ENCODE measurements at regions of chr20 and their contacts with region 1.

Region 1: DNA sequence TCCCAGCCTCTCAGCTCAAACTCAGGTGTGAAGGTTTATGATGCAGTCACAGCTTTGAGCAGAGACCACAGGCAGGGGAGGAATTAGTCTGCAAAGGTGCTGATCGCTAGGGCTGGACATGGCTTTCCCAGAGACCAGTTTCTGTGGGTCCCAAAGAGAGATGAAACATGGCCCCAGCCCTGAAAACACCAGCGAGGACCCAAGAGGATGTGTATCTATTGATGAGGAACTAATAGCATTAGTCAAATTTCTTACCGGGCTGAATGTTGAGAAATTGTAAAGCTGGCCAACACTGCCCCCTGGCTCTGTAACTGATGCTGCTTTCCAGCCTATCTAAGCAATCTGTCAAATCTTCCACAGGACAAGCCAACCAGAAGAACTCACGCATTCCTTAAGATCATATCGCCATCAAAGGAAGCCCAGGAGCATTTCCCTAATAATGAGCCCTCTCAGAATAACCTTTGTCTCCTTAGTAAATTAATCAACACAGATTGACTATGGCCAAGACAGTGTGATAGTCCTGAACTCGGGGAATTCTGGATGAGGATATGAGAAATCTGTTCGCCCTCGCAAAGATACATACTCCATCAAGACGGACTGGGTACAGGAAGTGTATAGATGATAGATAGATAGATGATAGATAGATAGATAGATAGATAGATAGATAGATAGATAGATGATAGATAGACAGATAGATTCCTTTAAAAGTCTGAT is 7.8 kb upstream of the ACSS1 start:
- DNase-seq: peak; percentile 83
- ATAC-seq: peak; percentile 65
- H3K4me3 Mint-ChIP-seq: no peak overlapping the region
- H3K27ac Mint-ChIP-seq: no peak overlapping the region
- H3K4me1 Mint-ChIP-seq: peaks cover 4% of the 10 kb centered on the region
- H3K27me3 Mint-ChIP-seq: peaks cover 15% of the 10 kb centered on the region
- CTCF ChIP-seq: peak; percentile 77

Region 2: GRCh38 chr20:24816907-24817306 is 248.9 kb before region 1 on chr20:
- CTCF ChIA-PET with region 1: no interaction called
- POLR2A ChIA-PET with region 1: no interaction called
- intact Hi-C with region 1: no loop called
- DNase-seq: no peak
- ATAC-seq: no peak
- H3K4me3 Mint-ChIP-seq: no peak overlapping the region
- H3K27ac Mint-ChIP-seq: no peak overlapping the region
- H3K4me1 Mint-ChIP-seq: no peaks in the 10 kb centered on the region
- H3K27me3 Mint-ChIP-seq: no peaks in the 10 kb centered on the region
- CTCF ChIP-seq: no peak

Region 3: GRCh38 chr20:24992487-24993205 is 73.1 kb before region 1 on chr20 and contains the start of gene APMAP:
- CTCF ChIA-PET with region 1: interaction called, 167 read pairs
- POLR2A ChIA-PET with region 1: interaction called, 3 read pairs
- intact Hi-C with region 1: loop called (anchors 1 kb)
- DNase-seq: peak; percentile 98
- ATAC-seq: peak; percentile 95
- H3K4me3 Mint-ChIP-seq: peak within 1 kb of the TSS; percentile 97
- H3K27ac Mint-ChIP-seq: peak within 1 kb of the TSS; percentile 95
- H3K4me1 Mint-ChIP-seq: peaks cover 54% of the 10 kb centered on the region
- H3K27me3 Mint-ChIP-seq: no peaks in the 10 kb centered on the region
- CTCF ChIP-seq: no peak
- total RNA-seq, gene APMAP: 36.7 to 40.0 TPM

Region 4: DNA sequence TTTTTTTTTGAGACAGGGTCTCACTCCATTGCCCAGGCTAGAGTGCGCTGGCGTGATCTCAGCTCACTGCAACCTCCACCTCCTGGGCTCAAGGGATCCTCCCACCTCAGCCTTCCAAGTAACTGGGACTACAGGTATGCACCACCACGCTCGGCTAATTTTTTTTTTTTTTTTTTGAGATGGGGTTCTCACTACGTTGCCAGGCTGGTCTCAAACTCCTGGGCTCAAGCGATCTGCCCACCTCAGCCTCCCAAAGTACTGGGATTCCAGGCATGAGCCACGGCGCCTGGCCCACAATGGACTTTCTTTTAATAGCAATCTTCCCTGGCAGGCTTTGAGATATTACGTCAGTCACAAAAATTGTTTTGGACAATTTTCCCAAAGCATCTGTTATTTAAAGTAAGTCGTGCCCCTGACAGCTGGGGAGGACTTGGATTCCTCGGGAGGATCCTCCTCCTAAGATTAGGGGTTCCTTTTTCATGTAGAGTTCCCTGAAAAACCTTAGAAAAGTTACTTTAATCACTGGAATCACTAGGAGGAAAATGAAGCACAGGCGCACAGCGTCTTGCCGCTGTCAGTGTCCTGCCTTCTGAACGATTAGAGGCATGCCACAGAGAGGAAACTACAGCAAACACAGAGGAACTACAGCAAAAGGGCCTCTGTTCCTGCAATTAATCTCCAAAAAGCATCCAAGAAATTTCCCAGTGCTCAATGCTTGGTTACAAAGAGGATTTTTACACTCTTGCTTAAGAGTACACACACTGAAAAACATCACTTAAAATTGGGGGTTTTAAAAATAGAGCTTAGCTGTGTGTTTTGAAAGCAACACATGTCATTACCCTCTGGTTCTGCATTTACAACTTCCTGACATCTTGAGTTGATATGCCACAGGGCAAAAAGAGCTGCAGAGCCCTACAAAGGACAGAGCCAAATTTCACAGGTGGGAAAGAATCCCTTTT is 12.4 kb before region 1 on chr20:
- CTCF ChIA-PET with region 1: interaction called, 12 read pairs
- POLR2A ChIA-PET with region 1: interaction called, 4 read pairs
- intact Hi-C with region 1: no loop called
- DNase-seq: no peak
- ATAC-seq: no peak
- H3K4me3 Mint-ChIP-seq: no peak overlapping the region
- H3K27ac Mint-ChIP-seq: no peak overlapping the region
- H3K4me1 Mint-ChIP-seq: peaks cover 51% of the 10 kb centered on the region
- H3K27me3 Mint-ChIP-seq: no peaks in the 10 kb centered on the region
- CTCF ChIP-seq: no peak